PC-9 (cell line): ENCODE measurements at regions of chr1 and their contacts with region 1.

Region 1: DNA sequence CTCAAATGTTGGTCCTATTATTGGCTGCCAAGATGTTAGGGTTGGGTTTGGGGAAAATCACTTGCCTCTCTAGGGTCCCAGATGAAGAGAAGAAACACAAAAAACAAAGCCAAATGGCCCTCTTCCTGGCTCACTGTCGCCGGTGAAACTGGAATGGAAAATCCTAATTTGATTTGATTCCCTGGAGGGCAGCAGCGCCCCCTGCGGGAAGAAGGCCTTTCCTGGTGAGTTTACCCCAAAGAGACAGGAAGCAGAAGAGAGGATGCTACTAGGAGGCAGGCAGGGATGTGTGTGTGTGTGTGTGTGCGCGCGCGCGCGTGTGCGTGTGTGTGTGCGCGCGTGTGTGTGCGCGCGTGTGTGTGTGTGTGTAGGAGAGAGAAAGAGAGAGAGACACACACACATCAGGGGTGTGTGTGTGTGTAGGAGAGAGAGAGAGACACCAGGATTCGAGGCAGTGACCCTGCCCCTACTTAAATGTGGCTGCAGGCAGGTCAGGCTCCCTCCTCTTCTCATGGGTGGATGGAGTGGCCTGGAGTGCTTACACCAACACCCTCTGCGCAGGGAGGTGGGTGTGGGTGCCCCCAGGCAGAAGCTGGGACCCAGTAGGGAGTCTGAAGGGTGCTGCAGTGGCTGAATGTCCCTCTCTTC is 3.1 kb upstream of the SELENON start:
- DNase-seq: peak in 1 of 2 experiments; percentile 75
- H3K4me3 ChIP-seq: no peak overlapping the region
- H3K27ac ChIP-seq: no peak overlapping the region
- H3K4me1 ChIP-seq: no peaks in the 10 kb centered on the region
- H3K27me3 ChIP-seq: no peaks in the 10 kb centered on the region
- CTCF ChIP-seq: peak; percentile 77

Region 2: DNA sequence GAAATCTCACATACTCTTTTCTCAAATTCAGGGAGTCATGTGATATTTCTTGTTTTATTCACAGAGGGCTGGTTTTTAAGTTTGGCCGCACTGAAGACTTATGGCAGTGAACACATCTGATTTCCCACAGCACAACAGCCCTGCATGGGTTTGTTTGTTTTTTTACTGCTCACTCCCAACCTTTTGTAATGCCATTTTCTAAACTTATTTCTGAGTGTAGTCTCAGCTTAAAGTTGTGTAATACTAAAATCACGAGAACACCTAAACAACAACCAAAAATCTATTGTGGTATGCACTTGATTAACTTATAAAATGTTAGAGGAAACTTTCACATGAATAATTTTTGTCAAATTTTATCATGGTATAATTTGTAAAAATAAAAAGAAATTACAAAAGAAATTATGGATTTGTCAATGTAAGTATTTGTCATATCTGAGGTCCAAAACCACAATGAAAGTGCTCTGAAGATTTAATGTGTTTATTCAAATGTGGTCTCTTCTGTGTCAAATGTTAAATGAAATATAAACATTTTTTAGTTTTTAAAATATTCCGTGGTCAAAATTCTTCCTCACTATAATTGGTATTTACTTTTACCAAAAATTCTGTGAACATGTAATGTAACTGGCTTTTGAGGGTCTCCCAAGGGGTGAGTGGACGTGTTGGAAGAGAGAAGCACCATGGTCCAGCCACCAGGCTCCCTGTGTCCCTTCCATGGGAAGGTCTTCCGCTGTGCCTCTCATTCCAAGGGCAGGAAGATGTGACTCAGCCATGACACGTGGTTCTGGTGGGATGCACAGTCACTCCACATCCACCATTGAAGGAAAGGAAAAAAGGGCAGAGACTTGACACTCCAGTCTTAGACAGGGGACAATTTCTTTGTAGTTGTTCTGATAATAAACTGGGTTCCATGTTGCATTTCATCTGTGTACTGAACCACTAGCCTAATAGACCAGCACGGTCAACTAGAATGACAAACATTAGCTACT is 436.0 kb before region 1 on chr1:
- CTCF ChIA-PET with region 1: no interaction called
- POLR2A ChIA-PET with region 1: no interaction called
- intact Hi-C with region 1: no loop called
- DNase-seq: no peak
- H3K4me3 ChIP-seq: no peak overlapping the region
- H3K27ac ChIP-seq: no peak overlapping the region
- H3K4me1 ChIP-seq: 0 out of 2 replicates have a peak, but pooled peaks cover 6% of the 10 kb centered on the region
- H3K27me3 ChIP-seq: no peaks in the 10 kb centered on the region
- CTCF ChIP-seq: no peak

Region 3: DNA sequence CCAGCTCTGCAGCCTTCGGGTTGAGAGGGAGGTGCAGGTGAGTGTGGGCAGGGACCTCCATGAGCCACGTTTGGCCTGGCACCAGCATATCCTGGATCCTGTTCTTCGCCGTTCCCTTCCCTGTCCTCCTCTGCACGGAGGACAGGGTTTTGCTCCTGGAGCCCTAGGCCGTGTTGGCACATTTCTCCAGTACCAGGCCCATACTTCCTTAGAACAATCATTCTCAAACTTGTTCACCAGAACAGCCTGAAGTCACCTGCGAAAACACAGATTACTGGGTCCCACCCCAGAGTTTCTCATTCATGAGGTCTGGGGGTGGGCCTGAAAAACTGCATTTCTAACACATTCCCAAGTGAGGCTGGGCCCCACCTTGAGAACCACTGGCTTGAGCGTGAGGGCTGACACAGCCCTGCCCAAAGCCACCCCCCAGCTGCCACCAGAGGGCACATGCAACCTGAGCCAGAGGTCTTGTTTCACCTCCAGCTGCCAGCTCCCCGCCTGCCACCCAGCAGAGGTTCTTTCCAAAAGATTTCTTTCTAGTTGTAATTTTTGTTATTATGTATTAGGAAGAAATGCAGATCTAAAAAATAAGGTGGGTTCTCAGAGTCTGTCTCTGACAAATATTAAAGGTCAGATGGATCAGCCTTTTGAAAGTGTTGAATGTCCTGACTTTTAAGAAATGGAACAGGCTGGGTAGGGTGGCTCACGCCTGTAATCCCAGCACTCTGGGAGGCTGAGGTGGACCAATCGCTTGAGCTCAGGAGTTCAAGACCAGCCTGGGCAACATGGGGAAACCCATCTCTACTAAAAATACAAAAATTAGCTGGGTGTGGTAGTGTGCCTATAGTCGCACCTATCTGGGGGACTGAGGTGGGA is 293.1 kb before region 1 on chr1:
- CTCF ChIA-PET with region 1: no interaction called
- POLR2A ChIA-PET with region 1: no interaction called
- intact Hi-C with region 1: loop called (anchors 2 kb)
- DNase-seq: peak; percentile 53 to 76
- H3K4me3 ChIP-seq: no peak overlapping the region
- H3K27ac ChIP-seq: no peak overlapping the region
- H3K4me1 ChIP-seq: peaks cover 21% of the 10 kb centered on the region
- H3K27me3 ChIP-seq: no peaks in the 10 kb centered on the region
- CTCF ChIP-seq: peak; percentile 66

Region 4: GRCh38 chr1:25520446-25521061 is 276.4 kb before region 1 on chr1:
- CTCF ChIA-PET with region 1: no interaction called
- POLR2A ChIA-PET with region 1: no interaction called
- intact Hi-C with region 1: loop called (anchors 5 kb)
- DNase-seq: peak in 1 of 2 experiments; percentile 34
- H3K4me3 ChIP-seq: no peak overlapping the region
- H3K27ac ChIP-seq: no peak overlapping the region
- H3K4me1 ChIP-seq: no peaks in the 10 kb centered on the region
- H3K27me3 ChIP-seq: no peaks in the 10 kb centered on the region
- CTCF ChIP-seq: peak; percentile 79

Region 5: DNA sequence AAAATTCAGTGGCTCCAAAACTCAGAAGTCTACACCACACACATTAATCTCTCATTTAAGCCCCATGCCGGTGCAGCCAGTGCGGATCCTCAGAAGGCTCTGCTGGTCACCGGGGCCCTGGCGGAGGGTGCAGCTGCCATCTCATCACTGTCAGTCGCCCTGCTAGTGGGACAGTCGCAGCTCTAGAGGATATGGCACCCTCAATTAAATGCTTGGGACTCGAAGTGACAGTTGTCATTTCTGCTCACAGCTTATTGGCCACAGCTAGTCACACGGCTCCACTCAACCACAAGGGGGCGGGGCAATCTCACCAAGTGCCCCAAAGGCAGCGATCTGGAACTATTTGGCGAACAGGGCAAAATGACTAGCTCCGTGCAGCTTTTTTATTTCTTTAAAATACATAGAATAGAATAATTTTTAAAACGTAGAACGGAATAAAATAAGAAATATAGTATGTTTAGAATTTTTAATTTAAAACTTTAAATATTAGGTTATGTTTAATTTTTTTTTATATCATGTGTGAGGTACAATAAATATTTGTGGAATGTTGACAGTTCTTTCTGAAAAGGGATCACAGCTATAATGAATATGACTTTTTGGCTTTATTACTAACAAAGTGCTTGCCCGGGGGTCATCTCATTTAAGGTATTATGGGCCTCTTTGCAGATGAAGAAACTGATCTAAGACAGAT is 188.3 kb before region 1 on chr1:
- CTCF ChIA-PET with region 1: no interaction called
- POLR2A ChIA-PET with region 1: no interaction called
- intact Hi-C with region 1: loop called (anchors 2 kb)
- DNase-seq: peak; percentile 43 to 69
- H3K4me3 ChIP-seq: no peak overlapping the region
- H3K27ac ChIP-seq: no peak overlapping the region
- H3K4me1 ChIP-seq: peaks cover 5% of the 10 kb centered on the region; the same call in 1 of the 2 replicates
- H3K27me3 ChIP-seq: no peaks in the 10 kb centered on the region
- CTCF ChIP-seq: peak; percentile 63

Region 6: DNA sequence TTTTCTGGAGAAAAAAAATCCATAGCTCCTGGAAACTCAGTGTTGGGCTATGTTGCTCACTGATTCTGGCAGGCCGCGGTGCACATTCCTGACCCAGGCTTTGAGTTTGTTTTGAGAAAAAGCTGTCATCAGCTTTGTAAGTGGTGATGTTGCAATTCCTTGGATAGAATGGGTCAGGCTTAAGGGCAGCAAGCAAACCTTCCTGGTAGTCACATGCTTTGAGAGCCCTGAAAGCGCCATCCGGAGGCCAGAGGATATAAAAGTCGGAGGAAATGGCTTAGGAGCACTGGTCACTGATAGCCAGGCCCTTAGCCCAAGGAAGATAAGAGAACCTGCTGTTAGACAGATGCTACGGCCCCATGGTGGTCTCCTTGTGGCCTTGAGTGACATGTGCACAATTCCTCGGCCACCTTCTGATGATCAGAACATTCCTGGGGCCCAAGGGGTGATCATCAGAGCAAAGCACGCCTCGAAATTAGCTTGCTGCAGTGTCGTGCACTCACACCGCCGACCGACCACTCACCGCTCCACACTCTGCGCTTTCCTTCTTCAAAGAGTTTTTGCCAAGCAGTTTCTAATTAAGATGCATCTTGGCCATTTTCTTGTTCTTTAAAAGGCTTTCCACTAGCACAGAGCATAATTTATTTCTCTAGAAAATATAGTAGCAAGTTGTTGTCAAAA is 101.7 kb before region 1 on chr1:
- CTCF ChIA-PET with region 1: no interaction called
- POLR2A ChIA-PET with region 1: no interaction called
- intact Hi-C with region 1: loop called (anchors 10 kb)
- DNase-seq: peak; percentile 60 to 85
- H3K4me3 ChIP-seq: no peak overlapping the region
- H3K27ac ChIP-seq: peak overlapping the region; percentile 64
- H3K4me1 ChIP-seq: peaks cover 19% of the 10 kb centered on the region
- H3K27me3 ChIP-seq: no peaks in the 10 kb centered on the region
- CTCF ChIP-seq: no peak; the same call in 1 of the 2 replicates

Region 7: GRCh38 chr1:25766721-25767436 is 30.1 kb before region 1 on chr1:
- CTCF ChIA-PET with region 1: no interaction called
- POLR2A ChIA-PET with region 1: no interaction called
- intact Hi-C with region 1: no loop called
- DNase-seq: no peak
- H3K4me3 ChIP-seq: no peak overlapping the region
- H3K27ac ChIP-seq: no peak overlapping the region
- H3K4me1 ChIP-seq: no peaks in the 10 kb centered on the region
- H3K27me3 ChIP-seq: no peaks in the 10 kb centered on the region
- CTCF ChIP-seq: no peak

Region 8: GRCh38 chr1:25871086-25871708 is 74.3 kb after region 1 on chr1:
- CTCF ChIA-PET with region 1: no interaction called
- POLR2A ChIA-PET with region 1: no interaction called
- intact Hi-C with region 1: no loop called
- DNase-seq: no peak
- H3K4me3 ChIP-seq: no peak overlapping the region
- H3K27ac ChIP-seq: no peak overlapping the region
- H3K4me1 ChIP-seq: peaks cover 17% of the 10 kb centered on the region
- H3K27me3 ChIP-seq: no peaks in the 10 kb centered on the region
- CTCF ChIP-seq: no peak

Region 9: DNA sequence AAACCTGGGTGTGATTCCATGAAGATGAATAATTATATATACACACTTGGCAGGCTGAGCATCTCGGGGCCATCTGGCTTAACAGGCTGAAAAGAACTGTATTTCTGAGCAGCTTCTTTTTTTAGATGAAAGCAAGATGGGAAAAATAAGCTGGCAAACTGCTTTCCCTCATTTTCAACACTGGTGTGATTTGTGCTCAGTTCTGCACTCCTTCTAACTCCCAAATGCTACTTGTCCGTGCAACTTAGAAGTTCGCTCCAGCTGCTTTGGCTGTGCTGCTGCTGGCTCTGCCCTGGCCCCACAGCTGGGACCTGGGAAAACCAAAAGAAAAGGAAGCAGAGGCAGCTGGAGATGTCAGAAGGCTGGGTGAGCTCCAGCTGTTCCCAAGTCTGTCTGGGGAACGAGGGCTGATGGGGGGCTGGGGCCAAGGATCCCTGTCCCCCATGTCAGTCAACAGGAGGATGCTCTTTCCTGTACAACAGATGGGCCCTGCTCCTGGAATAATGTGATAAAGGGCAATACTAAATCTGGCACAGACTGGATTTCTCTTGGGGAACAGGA is 156.0 kb after region 1 on chr1:
- CTCF ChIA-PET with region 1: no interaction called
- POLR2A ChIA-PET with region 1: no interaction called
- intact Hi-C with region 1: no loop called
- DNase-seq: no peak
- H3K4me3 ChIP-seq: no peak overlapping the region
- H3K27ac ChIP-seq: no peak overlapping the region
- H3K4me1 ChIP-seq: no peaks in the 10 kb centered on the region
- H3K27me3 ChIP-seq: no peaks in the 10 kb centered on the region
- CTCF ChIP-seq: no peak